Activated CD4-positive, alpha-beta memory T cell treated with anti-CD3 and anti-CD28 coated beads for 36 hours (primary cell): ENCODE measurements at regions of chr15 and their contacts with region 1.

Region 1: GRCh38 chr15:71800835-71801745 is 9.3 kb upstream of the NR2E3 start:
- DNase-seq: peak; percentile 33
- H3K4me3 Mint-ChIP-seq: no peak overlapping the region
- H3K27ac Mint-ChIP-seq: no peak overlapping the region
- H3K4me1 Mint-ChIP-seq: no peaks in the 10 kb centered on the region
- H3K27me3 Mint-ChIP-seq: peaks cover 14% of the 10 kb centered on the region

Region 2: GRCh38 chr15:71743861-71744382 is 57.2 kb before region 1 on chr15:
- CTCF ChIA-PET with region 1: interaction called, 33 read pairs
- POLR2A ChIA-PET with region 1: no interaction called
- intact Hi-C with region 1: loop called (anchors 1 kb)
- DNase-seq: peak; percentile 58
- H3K4me3 Mint-ChIP-seq: no peak overlapping the region
- H3K27ac Mint-ChIP-seq: no peak overlapping the region
- H3K4me1 Mint-ChIP-seq: no peaks in the 10 kb centered on the region
- H3K27me3 Mint-ChIP-seq: peaks cover 6% of the 10 kb centered on the region

Region 3: DNA sequence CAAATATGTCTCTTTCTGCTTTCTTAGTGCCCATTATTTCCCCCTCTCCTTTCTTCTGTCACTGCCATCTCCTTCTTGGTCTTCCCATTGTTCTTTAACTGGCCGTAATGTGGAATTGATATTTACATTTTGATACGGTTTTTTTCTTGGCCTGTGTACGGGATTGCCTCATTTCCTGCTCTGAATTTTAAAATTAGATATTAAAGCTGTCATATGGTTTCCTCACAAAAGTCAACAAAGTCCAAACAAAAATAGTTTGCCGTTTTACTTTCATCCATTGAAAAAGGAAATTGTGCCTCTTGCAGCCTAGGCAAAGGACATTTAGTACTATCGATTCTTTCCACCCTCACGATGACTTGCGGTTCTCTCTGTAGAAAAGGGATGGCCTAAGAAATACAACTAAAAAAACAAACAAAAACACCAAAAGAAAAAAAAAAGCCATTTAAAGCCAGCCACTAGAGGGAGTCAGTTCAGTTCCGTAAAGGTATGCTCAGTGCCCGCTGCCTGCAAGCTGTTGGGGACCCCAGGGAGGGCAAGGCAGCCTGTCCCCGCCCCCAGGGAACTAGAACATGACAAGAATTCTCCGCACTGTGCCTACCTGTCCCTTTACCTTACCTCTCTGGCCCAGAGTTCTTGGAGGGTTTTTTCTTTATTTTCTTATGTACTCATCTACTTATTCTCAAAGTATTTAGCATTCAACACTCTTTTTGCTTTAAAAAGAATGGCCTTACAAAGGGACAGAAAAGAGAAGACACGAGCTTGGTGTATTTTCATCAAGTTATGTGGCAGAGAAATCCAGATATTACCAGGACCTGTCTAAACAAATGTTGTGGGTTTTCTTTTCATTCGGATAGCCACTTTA is 20.7 kb before region 1 on chr15:
- CTCF ChIA-PET with region 1: interaction called, 19 read pairs
- POLR2A ChIA-PET with region 1: no interaction called
- intact Hi-C with region 1: no loop called
- DNase-seq: peak; percentile 40
- H3K4me3 Mint-ChIP-seq: no peak overlapping the region
- H3K27ac Mint-ChIP-seq: no peak overlapping the region
- H3K4me1 Mint-ChIP-seq: peaks cover 15% of the 10 kb centered on the region
- H3K27me3 Mint-ChIP-seq: peaks cover 25% of the 10 kb centered on the region

Region 4: DNA sequence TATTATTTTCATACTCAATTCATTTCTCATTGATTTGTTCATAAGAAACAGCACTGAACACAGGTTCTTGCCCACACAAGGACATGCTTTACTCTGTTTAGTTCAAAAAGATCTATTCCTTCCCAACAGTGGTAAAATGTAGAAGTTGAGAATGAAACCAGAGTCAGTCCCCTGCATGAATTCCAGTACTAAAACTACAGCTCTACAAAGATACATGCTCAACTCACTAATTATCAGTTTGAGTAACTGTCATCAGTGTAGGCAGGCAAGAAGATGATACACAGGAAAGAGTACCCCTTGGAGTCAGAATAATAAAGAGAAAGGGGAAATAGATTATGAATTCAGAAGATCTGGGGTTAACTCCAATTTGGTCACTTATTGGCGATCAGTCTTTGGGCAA is 52.5 kb after region 1 on chr15:
- CTCF ChIA-PET with region 1: no interaction called
- POLR2A ChIA-PET with region 1: no interaction called
- intact Hi-C with region 1: no loop called
- DNase-seq: no peak
- H3K4me3 Mint-ChIP-seq: no peak overlapping the region
- H3K27ac Mint-ChIP-seq: peak overlapping the region; percentile 25
- H3K4me1 Mint-ChIP-seq: peaks cover 7% of the 10 kb centered on the region
- H3K27me3 Mint-ChIP-seq: no peaks in the 10 kb centered on the region